Activated naive CD4-positive, alpha-beta T cell treated with anti-CD3 and anti-CD28 coated beads, Interleukin-2, amount 10 ng/mL, durations not matched to agents 7 days and 5 days (primary cell): ENCODE measurements at regions of chr9 and their contacts with region 1.

Region 1: DNA sequence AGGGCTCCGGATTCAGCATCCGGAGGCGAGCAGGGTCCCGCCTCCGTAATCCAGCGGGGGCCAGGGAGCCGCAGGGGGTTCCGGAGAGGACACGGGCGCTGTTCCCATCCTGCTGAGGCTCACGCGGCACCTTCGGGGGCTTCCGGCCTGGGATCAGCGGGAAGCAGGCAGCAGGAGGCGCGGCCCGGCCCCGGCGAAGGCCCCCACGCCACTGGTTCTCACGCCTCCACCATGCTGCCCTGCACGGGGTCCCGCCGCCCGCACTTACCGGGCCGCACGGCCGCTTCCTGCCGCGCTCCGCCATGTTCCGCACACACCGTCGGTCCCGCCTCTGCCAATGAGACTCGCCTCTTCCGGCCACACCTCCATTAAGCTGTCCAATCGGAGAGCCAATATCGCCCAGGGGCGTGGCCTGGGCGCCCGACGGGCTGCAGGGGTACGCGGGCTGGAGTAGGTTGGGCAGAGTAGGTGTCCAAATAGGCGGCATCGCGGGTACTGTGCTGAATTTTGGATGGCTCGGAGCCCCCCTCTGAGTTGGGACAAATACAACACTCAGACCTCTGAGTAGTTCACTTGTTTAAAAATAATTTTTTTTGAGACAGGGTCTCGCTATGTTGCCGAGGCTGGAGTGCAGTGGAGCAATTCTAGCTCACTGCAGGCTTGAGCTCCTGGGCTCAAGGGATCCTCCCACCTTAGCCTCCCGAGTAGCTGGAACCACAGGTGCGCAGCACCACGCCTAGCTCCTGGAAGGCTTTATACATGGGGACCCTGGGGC is at the start of gene SPOUT1:
- DNase-seq: peak; percentile 96
- H3K4me3 Mint-ChIP-seq: peak within 1 kb of the TSS; percentile 97
- H3K27ac Mint-ChIP-seq: peak within 1 kb of the TSS; percentile 90
- H3K4me1 Mint-ChIP-seq: peaks cover 28% of the 10 kb centered on the region
- H3K27me3 Mint-ChIP-seq: no peaks in the 10 kb centered on the region

Region 2: GRCh38 chr9:128175102-128175563 is 654.5 kb before region 1 on chr9:
- CTCF ChIA-PET with region 1: no interaction called
- DNase-seq: no peak
- H3K4me3 Mint-ChIP-seq: no peak overlapping the region
- H3K27ac Mint-ChIP-seq: no peak overlapping the region
- H3K4me1 Mint-ChIP-seq: no peaks in the 10 kb centered on the region
- H3K27me3 Mint-ChIP-seq: no peaks in the 10 kb centered on the region

Region 3: DNA sequence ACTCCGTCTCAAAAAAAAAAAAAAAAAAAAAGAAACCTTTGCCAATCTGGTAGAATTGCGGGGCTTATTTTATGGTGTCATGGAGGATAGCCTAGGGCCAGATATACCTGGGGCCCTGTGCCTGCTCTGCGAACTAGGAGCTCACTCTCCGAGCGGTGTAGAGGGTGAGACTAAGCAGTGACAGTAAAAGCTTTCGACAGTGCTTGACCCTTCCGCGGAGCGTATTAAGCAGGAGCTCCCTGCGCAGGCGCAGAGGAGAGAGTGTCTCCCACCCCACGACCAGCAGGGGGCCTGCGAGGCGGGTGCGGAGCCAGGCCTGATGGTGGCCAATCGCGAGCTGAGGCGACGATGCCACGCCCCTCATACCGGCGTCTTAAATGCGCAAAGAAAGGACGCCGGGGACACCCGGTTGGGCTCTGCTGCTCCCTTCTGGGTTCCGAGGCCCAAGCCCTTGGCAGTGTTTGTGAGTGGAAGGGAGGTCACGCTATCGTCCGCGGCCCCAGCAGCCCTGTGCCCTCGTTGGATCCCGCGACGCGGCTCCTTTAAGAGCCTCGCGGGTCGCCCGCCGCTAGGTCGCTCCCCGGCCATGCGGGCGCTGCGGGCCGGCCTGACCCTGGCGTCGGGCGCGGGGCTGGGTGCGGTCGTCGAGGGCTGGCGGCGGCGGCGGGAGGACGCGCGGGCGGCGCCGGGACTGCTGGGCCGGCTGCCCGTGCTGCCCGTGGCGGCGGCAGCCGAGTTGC is 11.4 kb before region 1 on chr9 and contains the start of gene ENDOG:
- CTCF ChIA-PET with region 1: interaction called, 22 read pairs
- DNase-seq: peak; percentile 98
- H3K4me3 Mint-ChIP-seq: peak within 1 kb of the TSS; percentile 80
- H3K27ac Mint-ChIP-seq: peak within 1 kb of the TSS; percentile 89
- H3K4me1 Mint-ChIP-seq: peaks cover 29% of the 10 kb centered on the region
- H3K27me3 Mint-ChIP-seq: peaks cover 7% of the 10 kb centered on the region

Region 4: GRCh38 chr9:128845155-128845931 is 15.7 kb after region 1 on chr9:
- CTCF ChIA-PET with region 1: no interaction called
- DNase-seq: no peak
- H3K4me3 Mint-ChIP-seq: no peak overlapping the region
- H3K27ac Mint-ChIP-seq: no peak overlapping the region
- H3K4me1 Mint-ChIP-seq: no peaks in the 10 kb centered on the region
- H3K27me3 Mint-ChIP-seq: no peaks in the 10 kb centered on the region

Region 5: GRCh38 chr9:129038109-129038852 is 208.6 kb after region 1 on chr9:
- CTCF ChIA-PET with region 1: no interaction called
- DNase-seq: no peak
- H3K4me3 Mint-ChIP-seq: peak overlapping the region; percentile 91
- H3K27ac Mint-ChIP-seq: peak overlapping the region; percentile 49
- H3K4me1 Mint-ChIP-seq: peaks cover 32% of the 10 kb centered on the region
- H3K27me3 Mint-ChIP-seq: no peaks in the 10 kb centered on the region